Endothelial cell of umbilical vein (primary cell): ENCODE measurements at regions of chr17 and their contacts with region 1.

Region 1: GRCh38 chr17:47663912-47664625 is 14.3 kb downstream of the KPNB1 start:
- DNase-seq: peak; percentile 80
- H3K4me3 ChIP-seq: no peak overlapping the region
- H3K27ac ChIP-seq: no peak overlapping the region
- H3K4me1 ChIP-seq: no peaks in the 10 kb centered on the region
- H3K27me3 ChIP-seq: no peaks in the 10 kb centered on the region
- CTCF ChIP-seq: peak; percentile 69 to 78
- POLR2A ChIP-seq: no peak

Region 2: DNA sequence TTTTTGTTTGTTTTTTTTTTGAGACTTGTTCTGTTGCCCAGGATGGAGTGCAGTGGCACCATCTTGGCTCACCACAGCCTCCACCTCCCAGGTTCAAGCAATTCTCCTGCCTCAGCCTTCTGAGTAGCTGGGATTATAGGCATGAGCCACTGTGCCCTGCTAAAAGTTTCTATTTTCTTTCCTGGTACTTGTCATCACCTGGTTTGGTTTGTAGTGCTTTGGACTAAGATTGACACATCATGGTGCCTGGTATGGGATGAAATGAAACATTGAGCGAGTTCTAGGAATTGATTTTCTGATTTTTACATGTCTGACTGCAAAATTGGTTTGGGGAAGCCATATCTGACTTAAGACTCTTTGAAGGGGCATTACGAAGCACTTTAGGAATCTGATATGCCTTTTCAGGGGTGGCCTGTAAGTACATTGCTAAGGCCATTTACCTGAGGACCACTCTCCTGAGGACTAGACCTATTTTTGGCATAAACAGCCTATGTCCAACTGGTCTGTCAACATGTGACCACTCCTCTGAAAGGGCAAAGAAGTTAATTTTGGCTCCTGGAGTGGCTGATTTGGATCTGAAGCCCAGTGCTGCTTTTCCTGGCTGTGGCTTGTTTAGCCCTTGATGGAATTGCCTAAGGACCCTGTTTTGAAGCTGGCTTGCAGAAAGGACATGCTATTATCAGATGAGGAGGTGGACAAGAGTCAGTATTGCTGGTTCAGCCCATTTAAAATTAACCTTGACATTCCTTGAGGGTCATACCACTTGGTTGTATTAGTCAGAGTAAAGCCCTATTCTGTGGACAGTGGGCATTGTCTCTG is 11.5 kb after region 1 on chr17:
- CTCF ChIA-PET with region 1: interaction called, 43 read pairs
- POLR2A ChIA-PET with region 1: no interaction called
- dilution Hi-C with region 1: no loop called
- intact Hi-C with region 1: no loop called
- DNase-seq: no peak
- H3K4me3 ChIP-seq: no peak overlapping the region
- H3K27ac ChIP-seq: no peak overlapping the region
- H3K4me1 ChIP-seq: no peaks in the 10 kb centered on the region
- H3K27me3 ChIP-seq: no peaks in the 10 kb centered on the region
- CTCF ChIP-seq: no peak
- POLR2A ChIP-seq: peak; percentile 49

Region 3: GRCh38 chr17:47789611-47790561 is 125.8 kb after region 1 on chr17:
- CTCF ChIA-PET with region 1: interaction called, 13 read pairs
- POLR2A ChIA-PET with region 1: no interaction called
- dilution Hi-C with region 1: no loop called
- intact Hi-C with region 1: no loop called
- DNase-seq: peak; percentile 35
- H3K4me3 ChIP-seq: peak overlapping the region in 2 of 3 experiments; percentile 6 to 12
- H3K27ac ChIP-seq: no peak overlapping the region
- H3K4me1 ChIP-seq: peaks cover 5% of the 10 kb centered on the region
- H3K27me3 ChIP-seq: peaks cover 25 to 58% of the 10 kb centered on the region in 2 experiments
- CTCF ChIP-seq: peak; percentile 27 to 69
- POLR2A ChIP-seq: no peak

Region 4: DNA sequence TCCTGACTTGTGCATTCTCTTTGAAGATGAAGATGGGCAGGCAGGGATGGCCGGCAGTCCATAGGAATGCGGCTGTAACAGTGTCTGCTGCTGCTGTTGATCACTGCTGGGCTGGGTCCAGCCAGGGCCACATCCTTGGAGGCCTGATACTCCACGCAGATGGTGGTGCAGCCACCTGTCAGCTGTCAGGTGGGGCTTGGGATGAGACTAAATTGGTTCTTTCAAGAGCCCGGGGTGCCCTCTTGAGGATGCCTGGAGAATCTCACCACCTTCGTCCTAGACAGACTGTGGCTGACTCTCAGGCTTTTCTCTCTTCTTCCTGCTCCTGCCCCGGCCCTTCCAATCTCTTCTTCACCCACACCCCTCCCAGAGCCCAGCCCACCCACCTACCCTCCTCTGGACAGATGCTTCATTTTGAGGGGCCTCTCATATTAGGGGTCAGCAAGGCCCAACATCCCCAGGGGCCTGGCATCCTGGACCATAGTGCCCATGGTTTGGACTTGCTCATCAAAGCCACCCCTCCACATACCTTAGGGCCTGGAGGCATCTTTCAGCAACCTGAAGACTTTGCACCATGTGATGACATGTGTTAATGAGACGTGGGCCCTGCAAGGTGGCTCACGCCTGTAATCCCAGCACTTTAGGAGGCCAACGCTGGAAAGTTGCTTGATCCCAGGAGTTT is 138.4 kb after region 1 on chr17:
- CTCF ChIA-PET with region 1: interaction called, 3 read pairs
- POLR2A ChIA-PET with region 1: no interaction called
- dilution Hi-C with region 1: no loop called
- intact Hi-C with region 1: loop called (anchors 5 kb)
- DNase-seq: peak; percentile 36
- H3K4me3 ChIP-seq: no peak overlapping the region
- H3K27ac ChIP-seq: no peak overlapping the region
- H3K4me1 ChIP-seq: no peaks in the 10 kb centered on the region
- H3K27me3 ChIP-seq: peaks cover 0 to 2% of the 10 kb centered on the region in 2 experiments
- CTCF ChIP-seq: peak; percentile 47 to 71
- POLR2A ChIP-seq: no peak

Region 5: DNA sequence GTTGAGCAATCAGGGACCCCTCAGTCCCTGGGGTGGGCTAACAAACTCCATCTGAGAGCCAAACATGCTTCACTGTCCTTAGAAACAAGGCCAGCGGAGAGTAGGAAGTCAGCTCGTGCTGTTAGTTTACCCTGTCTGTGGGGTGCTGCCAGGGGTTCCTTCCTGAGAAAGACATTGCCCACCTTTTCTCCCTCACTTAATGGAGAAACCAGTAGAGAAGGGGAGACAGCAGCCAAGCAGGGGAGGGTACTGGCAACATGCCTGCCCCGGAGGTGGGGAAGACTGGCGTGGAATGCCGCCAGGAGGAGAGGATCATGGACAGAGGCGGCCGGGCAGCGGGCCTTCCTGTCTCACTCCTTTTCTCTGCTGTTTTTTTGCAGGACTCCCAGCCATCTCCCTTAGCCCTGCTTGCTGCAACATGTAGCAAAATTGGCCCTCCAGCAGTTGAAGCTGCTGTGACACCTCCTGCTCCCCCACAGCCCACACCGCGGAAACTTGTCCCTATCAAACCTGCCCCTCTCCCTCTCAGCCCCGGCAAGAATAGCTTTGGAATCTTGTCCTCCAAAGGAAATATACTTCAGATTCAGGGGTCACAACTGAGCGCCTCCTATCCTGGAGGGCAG is 251.8 kb after region 1 on chr17:
- CTCF ChIA-PET with region 1: no interaction called
- POLR2A ChIA-PET with region 1: no interaction called
- dilution Hi-C with region 1: no loop called
- intact Hi-C with region 1: no loop called
- DNase-seq: no peak
- H3K4me3 ChIP-seq: no peak overlapping the region
- H3K27ac ChIP-seq: no peak overlapping the region
- H3K4me1 ChIP-seq: peaks cover 4% of the 10 kb centered on the region
- H3K27me3 ChIP-seq: no peaks in the 10 kb centered on the region
- CTCF ChIP-seq: no peak
- POLR2A ChIP-seq: no peak